Activated T-helper 1 cell treated with anti-CD3 and anti-CD28 coated beads, Interleukin-12 subunit alpha, Interleukin-12 subunit beta, Interleukin-2, Interleukin-4 antibody, amounts not matched to agents 30 ng/mL and 10 ng/mL and 1 ng/mL, durations not matched to agents 14 hours and 24 hours and 36 hours (primary cell): ENCODE measurements at regions of chr6 and their contacts with region 1.

Region 1: DNA sequence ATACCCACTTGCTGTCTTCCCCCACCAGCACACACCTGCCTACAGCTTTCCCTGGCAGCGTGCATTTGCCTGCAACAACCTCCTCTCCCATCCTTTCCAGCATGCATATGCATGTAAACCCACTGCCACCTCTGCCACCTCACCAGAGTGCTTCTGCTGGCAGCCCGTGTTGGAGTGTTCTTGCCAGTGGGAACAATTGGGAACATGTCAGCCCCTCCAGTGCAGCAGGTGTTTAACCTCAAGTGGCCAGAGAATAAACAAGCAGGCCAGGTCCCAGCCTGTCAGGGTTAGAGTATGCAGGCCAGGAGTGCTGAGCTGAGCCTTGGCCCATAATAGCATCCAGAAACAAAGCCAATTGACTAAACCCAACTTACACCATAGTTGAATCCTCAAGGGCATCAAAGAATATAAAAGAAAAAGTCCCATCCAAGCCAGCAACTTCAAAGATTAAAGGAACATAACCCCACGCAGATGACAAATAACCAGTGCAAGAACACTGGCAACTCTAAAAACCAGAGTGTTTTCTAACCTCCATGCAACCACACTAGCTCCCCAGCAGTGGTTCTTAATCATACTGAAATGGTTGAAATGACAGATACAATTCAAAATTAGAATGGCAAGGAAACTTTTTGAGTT is 1212.1 kb upstream of the CITED2 start:
- DNase-seq: peak; percentile 46
- H3K4me3 Mint-ChIP-seq: peak overlapping the region; percentile 32
- H3K27ac Mint-ChIP-seq: peak overlapping the region; percentile 94
- H3K4me1 Mint-ChIP-seq: peaks cover 48% of the 10 kb centered on the region
- H3K27me3 Mint-ChIP-seq: peaks cover 2% of the 10 kb centered on the region

Region 2: DNA sequence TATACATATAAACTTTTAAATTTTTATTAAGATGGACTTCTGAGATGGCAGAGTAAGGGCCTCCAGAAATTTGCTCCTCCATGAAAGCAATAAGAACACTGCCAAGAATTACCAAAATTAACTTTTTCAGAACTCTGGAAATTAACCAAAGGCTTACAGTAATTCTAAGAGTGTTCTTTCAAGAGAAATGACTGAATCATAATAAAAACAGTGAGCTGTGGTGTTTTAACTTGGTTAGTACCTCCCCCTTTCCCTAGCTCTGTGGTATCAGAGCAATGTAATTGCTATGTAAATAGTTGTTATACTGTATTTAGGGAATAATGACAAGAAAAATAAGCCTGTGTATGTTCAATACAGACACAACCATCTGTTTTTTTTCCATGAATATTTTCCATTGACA is 1432.7 kb before region 1 on chr6:
- intact Hi-C with region 1: loop called (anchors 10 kb)
- DNase-seq: no peak
- H3K4me3 Mint-ChIP-seq: peak overlapping the region; percentile 66
- H3K27ac Mint-ChIP-seq: peak overlapping the region; percentile 90
- H3K4me1 Mint-ChIP-seq: peaks cover 73% of the 10 kb centered on the region
- H3K27me3 Mint-ChIP-seq: no peaks in the 10 kb centered on the region

Region 3: DNA sequence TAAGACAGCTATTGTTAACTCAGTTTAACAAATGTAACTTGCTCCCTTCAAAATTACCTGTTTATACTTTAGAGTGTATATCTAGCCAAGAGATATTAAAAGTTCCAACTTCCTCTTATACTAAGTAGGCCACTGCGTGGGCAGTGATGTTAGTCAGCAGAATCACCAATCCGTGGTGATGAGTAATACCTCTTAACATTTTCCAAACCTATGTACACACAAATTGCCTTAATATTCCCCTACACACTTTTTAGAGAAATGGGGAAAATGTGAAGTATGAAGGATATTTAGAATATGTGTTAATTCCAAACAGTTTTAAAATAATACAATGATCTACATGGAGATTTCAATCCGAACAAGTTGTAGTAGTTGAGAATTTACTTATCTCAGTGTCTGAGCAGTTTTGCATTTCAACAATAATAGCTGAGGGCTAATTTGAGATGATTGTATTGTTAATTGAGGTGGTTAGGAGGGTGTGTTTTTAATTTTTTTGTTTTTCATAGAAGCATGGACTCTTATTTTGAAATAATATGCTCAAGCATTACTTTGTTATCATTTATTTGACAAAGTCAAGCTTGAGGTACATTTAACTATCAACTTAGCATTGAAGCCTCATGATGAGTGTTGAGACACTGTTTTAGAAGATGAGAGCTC is 100.3 kb before region 1 on chr6:
- intact Hi-C with region 1: loop called (anchors 5 kb)
- DNase-seq: no peak
- H3K4me3 Mint-ChIP-seq: peak overlapping the region; percentile 51
- H3K27ac Mint-ChIP-seq: peak overlapping the region; percentile 41
- H3K4me1 Mint-ChIP-seq: peaks cover 24% of the 10 kb centered on the region
- H3K27me3 Mint-ChIP-seq: no peaks in the 10 kb centered on the region

Region 4: DNA sequence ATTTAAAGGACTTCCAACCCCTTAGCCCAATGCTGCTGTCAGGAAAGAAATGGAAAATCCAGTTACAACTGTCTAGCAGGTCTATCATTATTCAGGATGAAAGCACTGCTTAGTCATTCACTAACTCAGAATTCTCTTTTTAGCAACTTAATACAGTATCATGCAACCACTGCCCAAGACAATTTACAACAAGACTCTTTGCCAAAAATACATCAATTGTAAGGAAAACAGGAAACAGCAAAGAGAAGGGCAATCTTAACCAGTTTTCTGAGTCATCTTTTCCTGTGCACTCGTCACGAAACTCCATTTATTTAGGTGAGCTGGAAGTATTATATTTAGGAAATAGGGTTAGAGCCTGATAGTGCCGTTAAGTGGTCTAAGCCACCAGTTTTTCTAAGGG is 14.4 kb before region 1 on chr6:
- intact Hi-C with region 1: loop called (anchors 1 kb)
- DNase-seq: no peak
- H3K4me3 Mint-ChIP-seq: peak overlapping the region; percentile 2
- H3K27ac Mint-ChIP-seq: peak overlapping the region; percentile 79
- H3K4me1 Mint-ChIP-seq: peaks cover 30% of the 10 kb centered on the region
- H3K27me3 Mint-ChIP-seq: peaks cover 4% of the 10 kb centered on the region

Region 5: GRCh38 chr6:140677781-140678528 is 91.4 kb after region 1 on chr6:
- intact Hi-C with region 1: no loop called
- DNase-seq: no peak
- H3K4me3 Mint-ChIP-seq: no peak overlapping the region
- H3K27ac Mint-ChIP-seq: no peak overlapping the region
- H3K4me1 Mint-ChIP-seq: no peaks in the 10 kb centered on the region
- H3K27me3 Mint-ChIP-seq: no peaks in the 10 kb centered on the region

Region 6: GRCh38 chr6:140711019-140711613 is 124.6 kb after region 1 on chr6:
- intact Hi-C with region 1: loop called (anchors 5 kb)
- DNase-seq: no peak
- H3K4me3 Mint-ChIP-seq: no peak overlapping the region
- H3K27ac Mint-ChIP-seq: no peak overlapping the region
- H3K4me1 Mint-ChIP-seq: no peaks in the 10 kb centered on the region
- H3K27me3 Mint-ChIP-seq: no peaks in the 10 kb centered on the region

Region 7: DNA sequence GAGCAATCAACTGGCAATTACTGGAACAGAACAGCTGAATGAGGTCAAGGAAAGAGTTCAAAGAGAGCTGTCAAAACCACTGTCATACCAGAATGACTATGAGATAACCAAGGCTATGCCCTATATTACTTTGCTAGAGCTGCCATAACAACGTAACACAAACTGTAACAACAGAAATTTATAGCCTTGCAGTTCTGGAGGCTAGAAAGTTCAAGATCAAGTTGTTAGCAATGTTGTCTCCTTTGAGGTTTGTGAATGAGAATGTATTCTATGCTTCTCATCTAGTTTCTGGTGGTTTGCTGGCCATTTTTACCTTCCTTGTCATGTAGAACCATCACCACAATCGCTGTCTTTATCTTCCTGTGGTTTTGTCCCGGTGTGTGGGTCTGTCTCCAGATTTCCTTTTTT is 223.2 kb after region 1 on chr6:
- intact Hi-C with region 1: loop called (anchors 1 kb)
- DNase-seq: peak; percentile 30
- H3K4me3 Mint-ChIP-seq: no peak overlapping the region
- H3K27ac Mint-ChIP-seq: peak overlapping the region; percentile 75
- H3K4me1 Mint-ChIP-seq: peaks cover 16% of the 10 kb centered on the region
- H3K27me3 Mint-ChIP-seq: peaks cover 10% of the 10 kb centered on the region